Activated naive CD8-positive, alpha-beta T cell treated with anti-CD3 and anti-CD28 coated beads, Interleukin-2, amount 10 ng/mL, durations not matched to agents 7 days and 5 days (primary cell): ENCODE measurements at regions of chr17 and their contacts with region 1.

Region 1: DNA sequence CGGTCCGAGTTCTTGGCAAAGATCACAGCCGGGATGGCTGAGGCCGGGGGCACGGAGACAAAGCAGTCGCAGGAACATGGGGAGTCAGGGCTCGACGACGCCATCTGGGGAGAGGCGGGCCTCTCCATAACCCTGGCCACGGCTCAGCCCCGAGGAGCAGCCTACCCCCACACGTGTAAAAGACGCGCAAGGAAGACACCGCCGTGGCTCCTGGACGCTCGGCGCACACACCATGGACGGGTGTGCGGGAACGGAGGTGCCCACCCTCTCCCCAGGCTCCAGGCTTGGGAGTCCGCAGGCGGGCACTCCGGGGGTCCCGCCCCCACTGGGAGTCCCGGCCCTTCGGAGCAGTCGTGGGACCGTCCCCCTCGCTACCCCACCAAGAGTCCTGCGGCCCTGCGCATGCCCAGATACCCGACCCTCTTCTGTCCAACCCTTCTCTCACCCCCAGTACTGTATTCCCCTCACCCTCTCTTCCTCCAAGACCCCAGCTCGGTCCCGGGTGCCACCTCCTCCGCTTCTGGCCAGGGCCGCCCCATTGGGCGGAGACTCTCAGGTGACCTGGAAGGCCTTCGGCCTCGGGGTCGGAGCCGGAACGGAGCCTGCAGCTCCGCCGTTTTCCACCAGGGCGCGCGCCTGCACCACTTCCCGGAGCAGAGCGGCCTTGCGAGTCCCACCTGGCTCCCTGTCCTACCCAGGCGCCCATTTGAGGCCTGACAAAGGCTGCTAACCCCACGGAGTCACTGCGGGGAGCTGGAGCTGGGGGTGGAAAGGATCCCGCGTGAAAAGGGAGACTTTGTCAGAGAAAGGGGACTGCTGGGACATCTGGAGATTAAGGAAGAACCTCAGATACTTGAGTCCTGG is at the start of gene SCRN2:
- DNase-seq: peak; percentile 96
- ATAC-seq: peak; percentile 84
- H3K4me3 Mint-ChIP-seq: peak within 1 kb of the TSS; percentile 100
- H3K27ac Mint-ChIP-seq: peak within 1 kb of the TSS; percentile 95
- H3K4me1 Mint-ChIP-seq: peaks cover 25% of the 10 kb centered on the region
- H3K27me3 Mint-ChIP-seq: peaks cover 11% of the 10 kb centered on the region
- total RNA-seq, gene SCRN2: 38.0 to 39.6 TPM

Region 2: GRCh38 chr17:47889734-47890529 is 49.0 kb after region 1 on chr17:
- POLR2A ChIA-PET with region 1: interaction called, 31 read pairs
- DNase-seq: peak; percentile 93
- ATAC-seq: peak; percentile 98
- H3K4me3 Mint-ChIP-seq: no peak overlapping the region
- H3K27ac Mint-ChIP-seq: no peak overlapping the region
- H3K4me1 Mint-ChIP-seq: peaks cover 28% of the 10 kb centered on the region
- H3K27me3 Mint-ChIP-seq: no peaks in the 10 kb centered on the region